K562 (cell line): ENCODE measurements at regions of chr6 and their contacts with region 1.

Region 1: GRCh38 chr6:157274471-157275226 is 48.7 kb downstream of the TMEM242 start:
- DNase-seq: peak; percentile 87 to 95 (median 94)
- ATAC-seq: peak; percentile 98
- H3K4me3 ChIP-seq: peak overlapping the region; percentile 63
- H3K27ac ChIP-seq: peak overlapping the region; percentile 54; the same call in 2 of the 3 replicates
- H3K4me1 ChIP-seq: peaks cover 14 to 26% of the 10 kb centered on the region in 2 experiments; a peak in 4 of 5 replicates
- H3K27me3 ChIP-seq: peaks cover 0 to 7% of the 10 kb centered on the region in 2 experiments; a peak in 2 of 5 replicates
- CTCF ChIP-seq: peak; percentile 54 to 94 (median 85); a peak in 5 of 6 replicates
- EP300 ChIP-seq: 0 out of 2 replicates have a peak, but pooled peaks have one; percentile 4
- POLR2A ChIP-seq: peak; percentile 63
- RAD21 ChIP-seq: peak; percentile 88 to 93

Region 2: GRCh38 chr6:157034436-157035230 is 240.0 kb before region 1 on chr6:
- CTCF ChIA-PET with region 1: interaction called, 10 read pairs
- POLR2A ChIA-PET with region 1: no interaction called
- in situ Hi-C with region 1: no loop called
- intact Hi-C with region 1: loop called (anchors 5 kb)
- DNase-seq: peak; percentile 49 to 66 (median 58)
- ATAC-seq: peak; percentile 85
- H3K4me3 ChIP-seq: no peak overlapping the region
- H3K27ac ChIP-seq: no peak overlapping the region
- H3K4me1 ChIP-seq: no peaks in the 10 kb centered on the region; a peak in 3 of 5 replicates
- H3K27me3 ChIP-seq: no peaks in the 10 kb centered on the region
- CTCF ChIP-seq: peak; percentile 60 to 85 (median 70); a peak in 5 of 6 replicates
- EP300 ChIP-seq: no peak
- POLR2A ChIP-seq: no peak
- RAD21 ChIP-seq: peak; percentile 67 to 82

Region 3: DNA sequence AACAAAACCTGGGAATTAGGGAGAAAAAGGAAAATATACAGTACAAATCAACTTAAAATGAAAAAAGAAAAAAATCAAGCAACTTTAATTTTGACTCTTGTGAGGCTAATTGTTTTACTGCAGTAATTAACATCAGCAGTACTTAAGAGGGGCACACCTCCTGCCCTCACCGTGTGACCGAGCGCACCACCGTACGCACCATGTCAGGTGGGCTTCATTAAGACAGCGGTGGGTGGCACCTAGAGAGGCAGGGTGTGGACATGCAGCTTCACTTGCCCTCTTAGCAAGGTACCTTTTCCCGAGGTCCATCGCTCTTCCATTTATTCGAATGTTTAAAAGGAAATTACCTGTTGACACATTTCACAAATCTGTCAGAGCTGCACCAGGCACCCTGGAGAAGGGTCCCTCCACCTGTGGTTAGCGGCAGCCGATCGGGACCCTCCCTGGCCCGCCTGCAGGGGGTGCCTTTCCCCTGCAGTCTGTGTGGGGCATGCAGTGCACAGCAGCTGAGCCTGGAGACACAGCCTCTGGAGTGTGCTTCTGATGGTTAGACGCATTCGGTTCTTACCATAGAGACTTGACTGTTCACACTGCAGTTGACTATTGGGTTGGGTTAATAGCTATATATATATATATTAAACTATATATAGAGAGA is 135.5 kb before region 1 on chr6:
- CTCF ChIA-PET with region 1: no interaction called
- POLR2A ChIA-PET with region 1: no interaction called
- in situ Hi-C with region 1: no loop called
- intact Hi-C with region 1: loop called (anchors 2 kb)
- DNase-seq: peak in 3 of 4 experiments; percentile 33 to 54 (median 41)
- ATAC-seq: peak; percentile 90
- H3K4me3 ChIP-seq: no peak overlapping the region
- H3K27ac ChIP-seq: no peak overlapping the region
- H3K4me1 ChIP-seq: peaks cover 0 to 3% of the 10 kb centered on the region in 2 experiments; a peak in 3 of 5 replicates
- H3K27me3 ChIP-seq: no peaks in the 10 kb centered on the region
- CTCF ChIP-seq: peak; percentile 49 to 70 (median 63)
- EP300 ChIP-seq: no peak
- POLR2A ChIP-seq: no peak
- RAD21 ChIP-seq: peak in 1 of 2 experiments; percentile 46; a peak in 2 of 4 replicates

Region 4: DNA sequence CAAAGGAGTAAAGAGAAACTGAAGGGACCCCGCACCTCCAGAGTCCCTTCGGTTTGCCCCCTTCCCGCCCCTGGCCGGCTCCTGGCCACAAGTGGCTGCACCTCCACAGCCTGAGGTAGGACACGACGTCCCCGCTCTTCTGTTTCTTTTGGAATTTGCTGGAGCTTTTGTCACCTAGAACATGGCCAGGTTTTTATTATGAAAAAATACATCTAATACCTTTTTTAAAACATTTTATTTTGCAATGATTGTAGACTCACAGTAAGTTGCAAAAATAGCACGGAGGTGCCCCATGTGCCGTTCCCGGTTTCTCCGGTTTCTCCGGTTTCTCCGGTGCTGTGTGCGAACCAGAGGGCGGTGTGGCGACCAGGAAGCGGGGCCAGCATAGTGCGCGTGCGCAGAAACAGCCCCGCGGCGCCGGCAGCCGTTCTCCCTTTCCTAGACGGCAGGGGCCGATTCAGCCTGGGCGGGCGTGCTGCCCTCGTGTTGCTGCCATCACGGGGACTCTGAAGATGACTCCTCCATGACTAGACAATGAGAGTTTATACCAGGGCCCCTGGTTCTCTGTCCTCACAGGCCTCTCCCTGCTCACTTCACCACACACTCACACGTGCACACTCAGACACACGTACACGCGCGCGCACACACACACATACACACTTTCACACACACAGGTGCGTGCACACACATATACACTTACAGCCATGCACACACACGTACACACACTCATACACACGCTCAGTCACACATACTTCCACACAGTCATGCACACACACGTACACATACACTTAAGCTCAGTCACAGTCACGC is 53.4 kb before region 1 on chr6:
- CTCF ChIA-PET with region 1: no interaction called
- POLR2A ChIA-PET with region 1: interaction called, 5 read pairs
- in situ Hi-C with region 1: no loop called
- intact Hi-C with region 1: loop called (anchors 2 kb)
- DNase-seq: peak; percentile 92 to 96 (median 95)
- ATAC-seq: peak; percentile 92
- H3K4me3 ChIP-seq: peak overlapping the region; percentile 31
- H3K27ac ChIP-seq: peak overlapping the region; percentile 54
- H3K4me1 ChIP-seq: peaks cover 13 to 60% of the 10 kb centered on the region in 2 experiments
- H3K27me3 ChIP-seq: no peaks in the 10 kb centered on the region; a peak in 1 of 5 replicates
- CTCF ChIP-seq: peak in 1 of 3 experiments; percentile 19; a peak in 2 of 6 replicates
- EP300 ChIP-seq: no peak
- POLR2A ChIP-seq: peak; percentile 80
- RAD21 ChIP-seq: no peak

Region 5: DNA sequence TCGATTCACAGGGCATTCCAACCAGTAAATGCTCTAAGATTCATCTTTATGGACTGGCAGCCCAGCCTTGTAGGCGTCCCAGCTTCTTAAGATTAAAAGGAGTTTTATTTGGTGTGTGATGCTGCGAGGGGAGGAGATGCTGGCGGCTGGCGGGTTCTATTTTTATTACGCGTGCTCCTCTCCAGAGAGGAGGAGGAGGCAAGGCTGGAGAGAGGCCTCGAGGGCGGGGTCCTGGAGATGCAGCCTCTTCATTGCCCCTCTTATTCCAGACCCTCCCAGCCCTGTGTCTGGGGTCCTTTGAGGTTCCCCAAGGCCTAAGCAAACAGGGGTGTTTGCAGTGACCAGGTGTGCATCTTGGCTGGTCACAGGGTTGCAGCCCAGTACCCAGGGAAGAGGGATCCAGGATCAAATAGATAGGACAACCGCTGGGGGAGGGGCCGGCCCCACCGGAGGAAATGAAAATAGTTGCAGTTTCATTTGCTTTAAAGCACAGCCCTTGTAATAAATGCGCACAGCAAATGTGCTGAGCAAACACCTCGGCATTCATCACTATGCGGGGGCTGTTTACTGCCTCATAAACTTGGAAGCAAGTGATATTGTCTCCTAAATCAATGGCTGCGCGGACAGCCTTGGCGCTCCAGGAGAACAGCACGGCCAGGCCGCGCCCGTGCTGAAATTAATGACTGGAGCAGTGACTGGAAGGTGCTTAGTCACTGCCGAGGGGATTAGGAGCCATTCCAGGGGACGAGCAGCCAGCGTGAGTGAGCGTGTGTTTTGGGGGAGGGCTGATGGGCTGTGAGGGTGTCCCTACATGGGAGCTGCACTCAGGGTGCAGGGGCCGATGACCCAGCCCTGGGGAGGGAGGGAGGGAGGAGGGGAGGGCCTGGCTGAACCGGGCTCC is 34.3 kb before region 1 on chr6:
- CTCF ChIA-PET with region 1: no interaction called
- POLR2A ChIA-PET with region 1: no interaction called
- in situ Hi-C with region 1: no loop called
- intact Hi-C with region 1: loop called (anchors 2 kb)
- DNase-seq: peak; percentile 87 to 92 (median 90)
- ATAC-seq: peak; percentile 97
- H3K4me3 ChIP-seq: peak overlapping the region; percentile 29
- H3K27ac ChIP-seq: peak overlapping the region; percentile 73
- H3K4me1 ChIP-seq: peaks cover 24 to 52% of the 10 kb centered on the region in 2 experiments
- H3K27me3 ChIP-seq: no peaks in the 10 kb centered on the region
- CTCF ChIP-seq: no peak
- EP300 ChIP-seq: peak; percentile 21; the same call in 1 of the 2 replicates
- POLR2A ChIP-seq: peak; percentile 65
- RAD21 ChIP-seq: peak in 1 of 2 experiments; percentile 8; a peak in 1 of 4 replicates